Prostate gland (tissue), 2 donors: ENCODE measurements at regions of chr5 and their contacts with region 1.

Region 1: GRCh38 chr5:67149951-67150523 is 46.6 kb downstream of the CD180 start:
- DNase-seq: no peak
- H3K4me3 ChIP-seq: no peak overlapping the region
- H3K27ac ChIP-seq: no peak overlapping the region
- H3K4me1 ChIP-seq: no peaks in the 10 kb centered on the region
- H3K27me3 ChIP-seq: no peaks in the 10 kb centered on the region
- CTCF ChIP-seq: peak in 3 of 4 experiments; percentile 34 to 51 (median 36)
- POLR2A ChIP-seq: no peak

Region 2: DNA sequence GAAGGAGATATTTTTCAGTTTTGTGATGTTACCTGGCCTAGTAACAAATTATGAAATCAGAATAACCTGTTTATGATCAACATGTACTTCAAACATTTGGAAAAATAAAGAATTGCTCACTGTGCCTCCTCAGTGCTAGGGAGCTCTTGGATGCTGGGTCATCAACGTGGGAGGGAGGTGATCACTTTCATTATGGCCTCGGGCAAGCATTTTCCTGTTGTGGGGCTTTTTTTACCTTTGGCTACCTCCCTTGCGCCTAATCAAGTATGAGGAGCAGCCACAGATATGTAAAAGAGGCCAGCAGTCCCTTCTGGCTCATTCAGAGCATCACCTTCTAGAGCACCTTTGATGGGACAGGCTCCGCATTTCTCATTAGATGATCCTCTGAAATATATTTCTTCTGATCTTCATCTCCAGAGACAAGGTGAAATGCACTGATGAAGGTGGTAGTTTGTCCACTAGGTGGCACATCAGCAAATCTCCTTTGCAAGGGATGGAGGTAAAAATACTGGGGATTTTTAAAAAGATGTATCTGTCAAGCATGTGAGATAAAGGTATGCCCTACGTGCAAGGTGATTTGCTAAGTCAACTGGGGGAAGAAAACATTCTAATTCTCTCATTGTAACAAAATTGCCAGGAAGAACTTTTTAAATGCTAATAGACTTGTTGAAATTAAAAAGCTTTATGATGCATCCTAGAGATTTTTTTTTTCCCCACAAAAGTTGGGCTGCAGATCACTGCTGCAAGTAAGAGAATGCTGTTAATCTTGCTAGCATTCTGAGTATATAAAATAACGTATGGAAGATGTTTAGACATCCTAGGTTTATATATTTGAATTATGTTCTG is 335.7 kb before region 1 on chr5:
- intact Hi-C with region 1: loop called (anchors 2 kb)
- DNase-seq: peak; percentile 51
- H3K4me3 ChIP-seq: no peak overlapping the region
- H3K27ac ChIP-seq: no peak overlapping the region
- H3K4me1 ChIP-seq: no peaks in the 10 kb centered on the region
- H3K27me3 ChIP-seq: no peaks in the 10 kb centered on the region
- CTCF ChIP-seq: peak; percentile 36 to 76 (median 71)
- POLR2A ChIP-seq: no peak

Region 3: DNA sequence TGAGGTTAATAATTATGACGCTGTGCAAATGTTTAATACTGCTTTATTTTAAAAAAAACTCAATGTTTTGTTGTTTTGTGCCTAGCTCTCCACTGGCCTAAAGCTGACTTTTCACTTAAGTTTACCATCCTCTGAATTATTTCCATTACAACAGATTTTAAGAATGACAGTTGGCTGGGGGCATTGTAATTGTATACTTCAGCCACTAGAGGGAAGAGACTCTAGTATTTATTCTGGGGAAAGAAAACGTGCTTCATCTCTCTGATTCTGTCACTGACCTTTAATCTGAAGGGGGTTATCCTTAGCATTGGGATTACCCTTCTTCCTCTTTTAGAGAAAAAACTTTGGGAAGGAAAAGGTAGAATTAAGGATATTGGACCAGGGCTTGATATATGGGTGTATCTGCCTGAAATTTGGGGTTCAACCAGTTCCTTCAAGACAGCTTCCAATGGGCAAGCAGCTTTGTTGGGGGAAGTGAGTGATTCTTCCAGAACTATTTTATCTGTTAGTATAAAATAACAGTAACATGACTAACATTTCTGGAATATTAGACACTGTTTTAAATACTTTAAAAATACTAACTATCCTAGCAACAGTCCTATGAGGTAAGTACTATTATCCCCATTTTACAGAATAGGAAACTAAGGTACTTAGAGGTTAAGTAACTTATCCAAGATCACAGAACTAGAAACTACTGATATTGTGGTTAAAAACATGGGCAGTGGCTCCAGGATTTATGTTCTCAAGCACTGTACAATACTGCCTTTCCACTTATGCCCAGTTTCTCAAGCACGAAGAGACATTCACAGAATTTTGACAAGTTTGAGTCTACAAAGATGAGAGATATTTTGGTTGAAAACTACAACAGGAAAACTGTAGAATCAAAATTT is 161.8 kb before region 1 on chr5:
- intact Hi-C with region 1: loop called (anchors 5 kb)
- DNase-seq: no peak
- H3K4me3 ChIP-seq: no peak overlapping the region
- H3K27ac ChIP-seq: no peak overlapping the region
- H3K4me1 ChIP-seq: no peaks in the 10 kb centered on the region
- H3K27me3 ChIP-seq: no peaks in the 10 kb centered on the region
- CTCF ChIP-seq: peak; percentile 60 to 80 (median 71)
- POLR2A ChIP-seq: no peak